Testis (tissue), 5 donors: ENCODE measurements at regions of chr10 and their contacts with region 1.

Region 1: DNA sequence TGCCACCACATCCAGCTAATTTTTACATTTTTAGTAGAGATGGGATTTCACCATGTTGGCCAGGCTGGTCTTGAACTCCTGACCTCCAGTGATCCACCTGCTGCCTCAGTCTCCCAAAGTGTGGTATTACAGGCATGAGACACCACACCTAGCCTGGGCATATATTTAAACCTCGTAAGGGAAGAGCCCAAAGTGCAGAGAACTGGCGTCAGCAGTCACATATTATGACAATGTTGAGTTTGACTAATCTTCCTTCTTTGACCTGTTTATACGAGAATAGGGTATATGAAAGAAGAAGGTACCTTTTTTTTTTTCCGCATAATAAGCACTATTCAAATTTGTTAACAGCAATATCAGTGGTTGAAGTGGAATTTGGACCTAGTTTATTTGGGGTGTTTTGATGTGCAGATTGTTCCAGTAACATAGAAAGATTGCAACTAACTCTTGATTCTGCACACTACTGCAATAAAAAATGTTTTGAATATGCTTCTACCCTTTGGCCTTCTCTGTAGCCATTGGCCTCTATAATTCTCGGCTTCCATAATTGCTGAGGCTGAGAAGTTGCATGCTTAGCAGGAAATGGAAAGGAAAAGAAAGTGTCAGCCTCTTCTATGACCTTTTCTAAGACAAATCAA is 55.9 kb downstream of the MINPP1 start:
- DNase-seq: no peak
- H3K4me3 ChIP-seq: no peak overlapping the region
- H3K27ac ChIP-seq: no peak overlapping the region
- H3K4me1 ChIP-seq: no peaks in the 10 kb centered on the region
- H3K27me3 ChIP-seq: no peaks in the 10 kb centered on the region
- CTCF ChIP-seq: no peak
- POLR2A ChIP-seq: no peak

Region 2: DNA sequence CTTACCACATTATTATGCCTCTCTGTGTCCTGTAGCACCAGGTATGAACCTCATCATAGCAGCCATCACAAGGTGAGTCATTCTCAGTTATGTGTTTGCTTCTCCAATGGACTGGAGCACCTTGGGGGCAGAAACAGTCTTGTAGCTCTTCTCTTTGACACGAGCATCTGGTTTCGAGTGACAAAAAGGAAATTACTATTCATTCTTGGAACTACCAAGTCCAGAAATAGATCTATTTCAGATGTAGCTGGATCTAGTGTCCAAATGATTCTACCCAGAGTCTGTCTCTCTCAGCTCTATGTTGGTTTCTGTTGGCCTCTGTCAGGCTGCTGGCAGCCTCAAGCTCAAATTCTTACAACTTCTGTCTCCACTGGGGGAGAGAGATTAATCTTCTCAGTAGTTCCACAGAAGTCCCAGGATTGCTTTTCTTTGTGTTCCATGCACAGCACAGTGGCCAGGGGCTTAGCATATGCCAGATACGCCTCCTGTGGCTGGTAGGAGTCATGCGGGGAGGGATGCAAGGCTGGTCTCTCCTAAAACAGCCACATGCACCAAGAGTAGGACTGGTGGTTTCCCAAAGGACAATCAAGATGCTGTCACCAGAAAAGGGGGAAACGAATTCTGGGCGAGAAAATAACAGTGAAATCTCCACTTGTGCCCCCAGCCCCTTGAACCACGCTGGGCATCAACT is 61.8 kb after region 1 on chr10:
- intact Hi-C with region 1: loop called (anchors 5 kb)
- DNase-seq: no peak
- H3K4me3 ChIP-seq: no peak overlapping the region
- H3K27ac ChIP-seq: no peak overlapping the region
- H3K4me1 ChIP-seq: no peaks in the 10 kb centered on the region
- H3K27me3 ChIP-seq: no peaks in the 10 kb centered on the region
- CTCF ChIP-seq: no peak
- POLR2A ChIP-seq: no peak